Endothelial cell of umbilical vein (primary cell): ENCODE measurements at regions of chr22 and their contacts with region 1.

Region 1: GRCh38 chr22:29701155-29701999 is 18.4 kb upstream of the CABP7 start:
- DNase-seq: peak; percentile 22
- H3K4me3 ChIP-seq: no peak overlapping the region
- H3K27ac ChIP-seq: no peak overlapping the region
- H3K4me1 ChIP-seq: peaks cover 10% of the 10 kb centered on the region
- H3K27me3 ChIP-seq: peaks cover 15% of the 10 kb centered on the region in 2 experiments
- CTCF ChIP-seq: peak; percentile 8 to 36
- POLR2A ChIP-seq: no peak

Region 2: DNA sequence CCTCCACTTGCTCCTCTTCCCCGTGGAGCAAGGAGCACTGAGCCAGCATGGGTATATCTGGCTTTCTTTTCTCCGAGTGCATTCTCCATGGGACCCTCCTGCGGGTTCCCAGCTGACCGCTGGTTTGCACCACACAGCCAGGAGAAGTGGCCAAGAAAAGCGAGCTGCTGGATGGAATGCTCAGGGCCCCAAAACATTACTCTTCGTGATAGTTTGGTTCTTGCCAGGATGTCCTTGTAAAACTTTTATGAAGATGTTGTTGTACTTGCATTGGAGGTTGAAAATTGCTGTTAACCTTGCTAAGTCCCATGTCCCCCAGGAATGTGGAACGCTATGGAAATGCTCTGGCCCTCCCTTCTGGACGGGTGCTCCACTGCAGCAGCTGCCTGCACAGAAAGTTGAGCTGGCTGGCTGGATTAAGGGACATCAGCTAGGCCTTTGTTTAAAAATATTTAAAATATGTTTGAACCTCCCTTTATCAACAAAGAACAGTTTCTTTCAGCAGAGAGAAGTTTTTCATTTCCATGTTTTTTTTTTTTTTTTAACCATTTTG is 749.3 kb before region 1 on chr22:
- CTCF ChIA-PET with region 1: no interaction called
- POLR2A ChIA-PET with region 1: no interaction called
- dilution Hi-C with region 1: no loop called
- intact Hi-C with region 1: no loop called
- DNase-seq: no peak
- H3K4me3 ChIP-seq: no peak overlapping the region
- H3K27ac ChIP-seq: no peak overlapping the region
- H3K4me1 ChIP-seq: no peaks in the 10 kb centered on the region
- H3K27me3 ChIP-seq: no peaks in the 10 kb centered on the region
- CTCF ChIP-seq: no peak
- POLR2A ChIP-seq: no peak

Region 3: GRCh38 chr22:29587938-29588699 is 113.3 kb before region 1 on chr22:
- CTCF ChIA-PET with region 1: no interaction called
- POLR2A ChIA-PET with region 1: no interaction called
- dilution Hi-C with region 1: no loop called
- intact Hi-C with region 1: no loop called
- DNase-seq: peak; percentile 42
- H3K4me3 ChIP-seq: no peak overlapping the region
- H3K27ac ChIP-seq: no peak overlapping the region
- H3K4me1 ChIP-seq: no peaks in the 10 kb centered on the region
- H3K27me3 ChIP-seq: no peaks in the 10 kb centered on the region
- CTCF ChIP-seq: no peak
- POLR2A ChIP-seq: no peak

Region 4: GRCh38 chr22:29716814-29717545 is 15.6 kb after region 1 on chr22:
- CTCF ChIA-PET with region 1: interaction called, 10 read pairs
- POLR2A ChIA-PET with region 1: interaction called, 6 read pairs
- dilution Hi-C with region 1: no loop called
- intact Hi-C with region 1: no loop called
- DNase-seq: peak; percentile 70
- H3K4me3 ChIP-seq: no peak overlapping the region
- H3K27ac ChIP-seq: no peak overlapping the region
- H3K4me1 ChIP-seq: no peaks in the 10 kb centered on the region
- H3K27me3 ChIP-seq: peaks cover 15 to 19% of the 10 kb centered on the region in 2 experiments
- CTCF ChIP-seq: no peak
- POLR2A ChIP-seq: no peak